Left cardiac atrium (tissue), 4 donors: ENCODE measurements at regions of chr11 and their contacts with region 1.

Region 1: DNA sequence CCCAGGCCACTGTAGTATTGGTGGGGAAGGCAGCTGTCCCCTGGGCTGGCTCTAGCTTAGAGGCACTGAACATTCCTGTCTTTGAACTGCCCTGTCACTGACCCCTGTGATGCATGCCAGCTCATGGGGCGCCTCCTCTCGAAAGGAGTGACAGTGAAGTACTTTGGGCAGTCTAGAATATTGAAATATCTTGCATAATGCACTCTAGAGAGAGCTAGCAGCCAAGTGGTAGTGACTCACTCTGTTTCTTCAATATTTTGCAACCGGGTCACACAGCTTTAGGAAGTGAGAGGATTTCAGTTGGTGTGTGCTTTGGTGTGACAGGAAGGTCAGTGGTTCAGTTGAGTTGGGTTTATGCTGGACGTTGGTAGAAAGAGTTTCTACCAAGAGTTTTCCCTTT is 35.5 kb upstream of the ST14 start:
- DNase-seq: peak; percentile 81
- ATAC-seq: peak; percentile 95 to 97

Region 2: DNA sequence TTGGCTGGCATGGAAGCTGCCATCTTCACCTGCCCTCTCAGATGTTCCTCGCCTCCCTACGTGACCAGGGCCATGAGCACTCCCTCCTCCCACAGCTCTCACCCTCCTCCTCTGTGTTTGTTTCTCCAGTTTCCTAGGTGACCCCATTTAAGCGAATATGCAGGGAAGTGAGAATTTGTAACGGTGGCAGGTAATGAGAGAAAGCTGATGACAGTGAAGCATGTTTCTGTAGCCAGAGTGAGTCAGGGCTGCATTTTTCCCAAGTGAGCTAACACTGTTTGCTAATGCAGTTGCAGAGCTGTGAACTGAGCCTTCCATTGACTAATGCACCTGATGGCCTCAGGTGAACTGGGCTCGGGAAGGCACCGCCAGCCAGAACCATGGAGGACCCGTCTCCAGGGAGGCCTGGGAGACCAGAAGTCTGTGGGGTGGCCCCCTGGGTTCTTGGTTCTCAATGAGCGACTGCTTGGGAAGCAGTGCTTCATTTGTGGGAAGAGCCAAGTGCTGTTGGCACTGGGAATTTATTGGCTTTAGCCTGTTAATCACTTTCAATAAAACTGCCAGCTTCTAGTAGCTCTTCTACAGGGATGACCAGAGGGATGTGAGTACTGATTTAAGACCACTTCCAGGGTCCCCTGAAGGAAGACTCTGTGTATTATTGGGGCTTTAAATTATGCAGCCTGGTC is 683.9 kb before region 1 on chr11:
- intact Hi-C with region 1: no loop called
- DNase-seq: no peak
- ATAC-seq: peak; percentile 50 to 91

Region 3: GRCh38 chr11:130002846-130003716 is 121.0 kb before region 1 on chr11:
- intact Hi-C with region 1: loop called in 1 of 2 experiments (anchors 5 kb)
- DNase-seq: peak; percentile 94
- ATAC-seq: peak; percentile 90 to 93

Region 4: DNA sequence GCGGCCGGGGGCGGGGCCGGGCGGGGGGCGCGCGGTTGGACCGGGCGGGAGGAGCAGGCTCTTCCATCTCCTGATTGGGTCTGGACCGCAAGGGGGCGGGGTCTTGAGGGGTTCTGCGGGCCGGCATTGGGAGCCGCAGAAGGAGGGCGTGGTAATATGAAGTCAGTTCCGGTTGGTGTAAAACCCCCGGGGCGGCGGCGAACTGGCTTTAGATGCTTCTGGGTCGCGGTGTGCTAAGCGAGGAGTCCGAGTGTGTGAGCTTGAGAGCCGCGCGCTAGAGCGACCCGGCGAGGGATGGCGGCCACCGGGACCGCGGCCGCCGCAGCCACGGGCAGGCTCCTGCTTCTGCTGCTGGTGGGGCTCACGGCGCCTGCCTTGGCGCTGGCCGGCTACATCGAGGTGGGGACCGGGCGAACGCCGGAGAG is 54.4 kb before region 1 on chr11 and contains the start of gene APLP2:
- intact Hi-C with region 1: loop called (anchors 5 to 10 kb)
- DNase-seq: peak; percentile 100
- ATAC-seq: peak; percentile 92 to 93
- total RNA-seq, gene APLP2: 298 to 322 TPM